Activated CD8-positive, alpha-beta memory T cell treated with anti-CD3 and anti-CD28 coated beads, Interleukin-2, amount 10 ng/mL, durations not matched to agents 7 days and 5 days (primary cell): ENCODE measurements at regions of chr9 and their contacts with region 1.

Region 1: DNA sequence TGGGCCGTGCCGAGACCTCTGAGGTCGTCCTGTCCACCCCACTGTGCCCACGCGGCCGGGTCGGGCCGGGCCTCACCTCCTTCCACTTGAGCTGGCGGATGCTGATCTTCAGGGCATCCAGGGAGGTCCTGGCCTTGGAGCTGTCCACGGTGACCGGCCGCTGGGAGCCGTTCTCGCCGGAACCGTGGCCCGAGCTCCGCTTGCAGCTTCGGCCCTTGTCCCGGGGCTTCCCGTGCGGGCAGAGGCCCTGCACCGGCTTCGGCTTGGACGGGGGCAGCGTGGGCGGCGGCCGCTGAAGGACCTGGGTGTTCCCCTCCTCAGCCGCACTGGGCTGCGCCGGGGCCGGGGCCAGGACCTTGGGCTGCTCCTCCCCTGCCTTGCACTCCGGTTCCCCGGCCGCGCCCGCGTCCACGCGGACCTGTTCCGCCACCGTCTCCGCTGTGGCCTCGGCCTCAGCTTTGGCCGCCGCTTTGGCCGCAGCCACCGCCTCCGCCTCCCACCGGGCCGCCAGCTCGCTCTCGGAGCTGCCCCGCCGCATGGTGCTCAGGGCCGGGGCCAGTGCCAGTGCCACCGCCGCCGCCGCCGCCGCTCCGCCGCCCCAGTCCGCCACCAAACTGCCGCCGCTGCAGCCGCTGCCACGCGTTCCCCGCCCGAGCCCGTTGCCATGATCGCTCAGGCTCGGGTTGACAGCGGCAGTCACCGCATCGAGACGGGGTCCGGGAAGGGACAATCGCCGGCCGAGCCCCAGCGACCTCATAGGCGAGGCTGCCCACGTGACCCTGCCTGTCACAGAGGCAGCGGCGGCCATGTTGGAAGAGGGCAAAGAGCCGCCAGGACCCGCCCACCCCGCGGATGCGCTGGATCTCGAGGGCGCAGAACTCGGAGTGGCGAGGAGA is at the start of gene TTLL11:
- DNase-seq: peak; percentile 97
- ATAC-seq: peak; percentile 95
- H3K4me3 Mint-ChIP-seq: peak within 1 kb of the TSS; percentile 77
- H3K27ac Mint-ChIP-seq: peak within 1 kb of the TSS; percentile 34
- H3K4me1 Mint-ChIP-seq: peaks cover 23% of the 10 kb centered on the region
- H3K27me3 Mint-ChIP-seq: peaks cover 29% of the 10 kb centered on the region
- total RNA-seq, gene TTLL11: 2.2 to 2.5 TPM

Region 2: DNA sequence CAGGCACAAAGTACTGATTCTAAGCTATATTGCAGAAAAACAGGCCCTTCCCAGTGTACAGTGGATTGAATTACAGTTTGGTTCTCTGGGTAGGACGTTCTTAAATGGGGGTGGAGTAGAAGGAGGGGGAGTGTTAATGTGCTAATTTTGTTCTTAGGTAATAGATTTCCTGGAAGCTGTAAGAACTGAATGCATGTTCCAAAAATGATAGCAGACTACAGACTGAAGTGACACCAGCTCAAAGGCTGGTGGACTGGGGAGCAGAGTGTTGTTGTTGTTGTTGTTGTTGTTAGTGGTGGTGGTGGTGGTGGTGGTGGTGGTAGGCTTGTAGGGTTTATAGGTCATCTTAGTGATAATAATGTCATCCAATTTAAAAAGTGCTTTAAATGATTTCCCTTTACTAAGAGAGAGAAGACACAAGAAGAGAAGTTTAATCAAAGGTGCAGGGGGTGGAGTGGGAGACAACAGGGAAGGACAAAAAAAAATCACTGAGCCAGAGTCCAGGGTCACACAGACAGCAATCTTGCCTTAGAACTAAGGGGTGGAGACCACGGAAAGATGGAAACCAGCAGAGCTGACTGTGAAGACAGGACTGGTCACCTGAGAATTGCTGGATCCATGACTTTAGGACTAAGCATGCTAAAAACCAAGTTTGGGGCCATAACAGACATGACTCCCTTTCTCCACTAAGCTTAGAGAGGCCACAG is 26.8 kb before region 1 on chr9:
- CTCF ChIA-PET with region 1: no interaction called
- DNase-seq: no peak
- ATAC-seq: no peak
- H3K4me3 Mint-ChIP-seq: no peak overlapping the region
- H3K27ac Mint-ChIP-seq: no peak overlapping the region
- H3K4me1 Mint-ChIP-seq: no peaks in the 10 kb centered on the region
- H3K27me3 Mint-ChIP-seq: no peaks in the 10 kb centered on the region

Region 3: DNA sequence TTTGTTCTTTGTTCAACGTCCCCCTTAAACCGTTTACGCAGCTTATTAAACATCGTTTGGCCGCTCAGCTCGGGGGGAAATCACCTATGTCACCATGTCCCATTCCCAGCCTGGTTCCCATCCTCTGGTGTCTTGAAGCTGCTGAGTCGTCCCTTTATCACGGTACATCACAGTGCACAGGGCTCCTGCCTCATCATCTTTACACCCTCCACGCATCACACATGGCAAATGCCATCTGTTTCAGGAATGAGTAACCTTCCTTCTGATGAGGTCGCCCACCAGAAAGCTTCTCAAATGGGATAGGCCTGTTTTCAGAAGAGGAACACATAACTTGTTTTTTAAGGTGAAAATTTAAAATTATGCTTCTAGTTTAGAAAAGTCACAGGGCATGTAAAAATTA is 143.8 kb after region 1 on chr9:
- CTCF ChIA-PET with region 1: no interaction called
- DNase-seq: no peak
- ATAC-seq: no peak
- H3K4me3 Mint-ChIP-seq: no peak overlapping the region
- H3K27ac Mint-ChIP-seq: no peak overlapping the region
- H3K4me1 Mint-ChIP-seq: no peaks in the 10 kb centered on the region
- H3K27me3 Mint-ChIP-seq: peaks cover 21% of the 10 kb centered on the region

Region 4: GRCh38 chr9:122350638-122351355 is 257.9 kb after region 1 on chr9:
- CTCF ChIA-PET with region 1: interaction called, 143 read pairs
- DNase-seq: peak; percentile 86
- ATAC-seq: peak; percentile 88
- H3K4me3 Mint-ChIP-seq: no peak overlapping the region
- H3K27ac Mint-ChIP-seq: no peak overlapping the region
- H3K4me1 Mint-ChIP-seq: peaks cover 26% of the 10 kb centered on the region
- H3K27me3 Mint-ChIP-seq: peaks cover 25% of the 10 kb centered on the region